IMR-90 (cell line): ENCODE measurements at regions of chr11 and their contacts with region 1.

Region 1: GRCh38 chr11:83836883-83837654 is 550.9 kb upstream of the CCDC90B start:
- DNase-seq: peak; percentile 50
- ATAC-seq: peak; percentile 91
- H3K4me3 ChIP-seq: no peak overlapping the region
- H3K27ac ChIP-seq: no peak overlapping the region
- H3K4me1 ChIP-seq: peaks cover 2% of the 10 kb centered on the region; the same call in 1 of the 2 replicates
- H3K27me3 ChIP-seq: peaks cover 4% of the 10 kb centered on the region; the same call in 1 of the 2 replicates
- CTCF ChIP-seq: peak; percentile 77
- POLR2A ChIP-seq: no peak
- RAD21 ChIP-seq: peak; percentile 84

Region 2: DNA sequence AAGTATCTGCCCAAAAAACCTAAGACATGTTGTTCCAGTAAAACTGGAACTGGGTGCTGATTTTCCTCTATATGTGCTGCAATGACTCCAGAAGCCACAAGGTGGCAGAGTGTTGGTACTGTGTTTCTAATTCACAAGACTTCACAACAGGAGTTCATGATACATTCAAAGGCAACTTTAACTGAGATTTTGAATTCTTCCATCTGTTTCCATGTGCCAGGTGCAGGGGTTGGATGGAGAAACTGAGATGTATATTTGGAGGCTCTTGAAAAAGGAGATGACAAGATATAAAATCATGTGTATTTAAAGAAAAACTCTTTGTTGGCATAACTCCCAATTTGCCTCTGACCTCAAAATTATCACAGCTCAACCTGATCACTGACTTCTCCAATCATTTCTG is 547.7 kb after region 1 on chr11:
- CTCF ChIA-PET with region 1: interaction called, 3 read pairs
- POLR2A ChIA-PET with region 1: no interaction called
- dilution Hi-C with region 1: no loop called
- in situ Hi-C with region 1: no loop called
- intact Hi-C with region 1: loop called (anchors 5 kb)
- DNase-seq: peak; percentile 34
- ATAC-seq: peak; percentile 60; the same call in 1 of the 2 replicates
- H3K4me3 ChIP-seq: no peak overlapping the region
- H3K27ac ChIP-seq: no peak overlapping the region
- H3K4me1 ChIP-seq: no peaks in the 10 kb centered on the region
- H3K27me3 ChIP-seq: no peaks in the 10 kb centered on the region
- CTCF ChIP-seq: peak; percentile 63
- POLR2A ChIP-seq: no peak
- RAD21 ChIP-seq: peak; percentile 26; the same call in 1 of the 2 replicates

Region 3: GRCh38 chr11:84524422-84525051 is 687.5 kb after region 1 on chr11:
- CTCF ChIA-PET with region 1: interaction called, 18 read pairs
- POLR2A ChIA-PET with region 1: no interaction called
- dilution Hi-C with region 1: no loop called
- in situ Hi-C with region 1: no loop called
- intact Hi-C with region 1: loop called (anchors 2 kb)
- DNase-seq: peak; percentile 25
- ATAC-seq: no peak
- H3K4me3 ChIP-seq: no peak overlapping the region
- H3K27ac ChIP-seq: no peak overlapping the region
- H3K4me1 ChIP-seq: no peaks in the 10 kb centered on the region
- H3K27me3 ChIP-seq: no peaks in the 10 kb centered on the region
- CTCF ChIP-seq: peak; percentile 49
- POLR2A ChIP-seq: no peak
- RAD21 ChIP-seq: peak; percentile 52

Region 4: DNA sequence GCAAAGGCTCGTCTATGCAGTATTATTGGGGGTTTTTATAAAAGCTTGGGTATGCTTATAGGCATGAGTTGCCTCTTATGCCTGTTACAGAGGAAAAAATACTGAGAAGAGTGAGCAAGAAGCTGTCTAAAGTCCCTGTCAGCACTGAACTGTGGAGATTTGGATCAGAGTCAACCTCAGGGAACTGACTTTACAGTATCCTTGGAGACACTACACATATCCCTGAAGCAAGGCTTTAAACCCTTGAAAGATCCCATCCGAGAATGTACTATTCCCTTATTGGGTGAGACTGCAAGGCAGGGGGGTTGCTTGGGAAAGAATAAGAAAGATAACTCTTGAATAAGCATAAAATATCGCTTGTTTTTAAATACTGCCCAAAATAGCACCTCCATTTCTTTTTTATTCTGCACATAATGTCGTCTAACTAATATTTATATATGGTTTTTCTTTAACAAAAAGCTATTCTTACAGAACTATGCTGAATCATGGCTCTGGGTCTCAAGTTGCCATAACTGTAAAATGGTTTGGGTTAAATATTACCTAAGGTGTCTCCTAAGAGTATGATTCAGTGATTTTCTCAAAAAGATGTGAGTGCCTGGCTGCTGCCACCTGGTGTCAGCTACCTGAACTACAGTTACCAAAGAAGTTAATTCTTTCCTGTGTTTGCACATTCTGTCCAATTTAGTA is 727.3 kb after region 1 on chr11:
- CTCF ChIA-PET with region 1: interaction called, 10 read pairs
- POLR2A ChIA-PET with region 1: no interaction called
- dilution Hi-C with region 1: no loop called
- in situ Hi-C with region 1: loop called (anchors 10 kb)
- intact Hi-C with region 1: loop called (anchors 1 kb)
- DNase-seq: peak; percentile 44
- ATAC-seq: peak; percentile 83; the same call in 1 of the 2 replicates
- H3K4me3 ChIP-seq: no peak overlapping the region
- H3K27ac ChIP-seq: no peak overlapping the region
- H3K4me1 ChIP-seq: no peaks in the 10 kb centered on the region
- H3K27me3 ChIP-seq: no peaks in the 10 kb centered on the region
- CTCF ChIP-seq: peak; percentile 74
- POLR2A ChIP-seq: no peak
- RAD21 ChIP-seq: peak; percentile 53